GM12878 (cell line): ENCODE measurements at regions of chr2 and their contacts with region 1.

Region 1: GRCh38 chr2:26959331-26959730 is 11.1 kb upstream of the MAPRE3 start:
- DNase-seq: no peak
- ATAC-seq: no peak
- H3K4me3 ChIP-seq: no peak overlapping the region
- H3K27ac ChIP-seq: no peak overlapping the region
- H3K4me1 ChIP-seq: no peaks in the 10 kb centered on the region
- H3K27me3 ChIP-seq: no peaks in the 10 kb centered on the region; a peak in 2 of 4 replicates
- CTCF ChIP-seq: no peak
- EP300 ChIP-seq: no peak
- POLR2A ChIP-seq: no peak
- RAD21 ChIP-seq: no peak

Region 2: GRCh38 chr2:26970244-26970920 is 11.1 kb after region 1 on chr2 and contains the start of gene MAPRE3:
- CTCF ChIA-PET with region 1: interaction called, 10 read pairs
- POLR2A ChIA-PET with region 1: no interaction called
- RAD21 ChIA-PET with region 1: interaction called, 6 read pairs
- SMC1A ChIA-PET with region 1: interaction called, 7 read pairs
- in situ Hi-C with region 1: no loop called
- intact Hi-C with region 1: no loop called
- DNase-seq: no peak
- ATAC-seq: peak; percentile 97
- H3K4me3 ChIP-seq: peak within 1 kb of the TSS; percentile 67
- H3K27ac ChIP-seq: no peak within 1 kb of the TSS
- H3K4me1 ChIP-seq: no peaks in the 10 kb centered on the region
- H3K27me3 ChIP-seq: peaks cover 1 to 2% of the 10 kb centered on the region in 2 experiments; a peak in 3 of 4 replicates
- CTCF ChIP-seq: no peak
- EP300 ChIP-seq: no peak
- POLR2A ChIP-seq: no peak
- RAD21 ChIP-seq: no peak
- polyA plus RNA-seq, gene MAPRE3: 0.03 TPM in 1 of 2 experiments, not detected in the other

Region 3: GRCh38 chr2:27016801-27017325 is 57.5 kb after region 1 on chr2:
- CTCF ChIA-PET with region 1: interaction called, 153 read pairs
- POLR2A ChIA-PET with region 1: no interaction called
- RAD21 ChIA-PET with region 1: interaction called, 34 read pairs
- SMC1A ChIA-PET with region 1: interaction called, 61 read pairs
- in situ Hi-C with region 1: no loop called
- intact Hi-C with region 1: loop called (anchors 1 kb)
- DNase-seq: no peak
- ATAC-seq: peak; percentile 77
- H3K4me3 ChIP-seq: no peak overlapping the region
- H3K27ac ChIP-seq: no peak overlapping the region
- H3K4me1 ChIP-seq: no peaks in the 10 kb centered on the region
- H3K27me3 ChIP-seq: no peaks in the 10 kb centered on the region
- CTCF ChIP-seq: peak; percentile 58 to 66 (median 58)
- EP300 ChIP-seq: no peak
- POLR2A ChIP-seq: no peak
- RAD21 ChIP-seq: peak; percentile 74

Region 4: GRCh38 chr2:27545348-27546141 is 586.2 kb after region 1 on chr2:
- CTCF ChIA-PET with region 1: no interaction called
- POLR2A ChIA-PET with region 1: no interaction called
- RAD21 ChIA-PET with region 1: no interaction called
- SMC1A ChIA-PET with region 1: no interaction called
- in situ Hi-C with region 1: no loop called
- intact Hi-C with region 1: no loop called
- DNase-seq: no peak
- ATAC-seq: no peak
- H3K4me3 ChIP-seq: no peak overlapping the region
- H3K27ac ChIP-seq: no peak overlapping the region
- H3K4me1 ChIP-seq: no peaks in the 10 kb centered on the region
- H3K27me3 ChIP-seq: no peaks in the 10 kb centered on the region
- CTCF ChIP-seq: no peak
- EP300 ChIP-seq: no peak
- POLR2A ChIP-seq: no peak
- RAD21 ChIP-seq: no peak